Activated B cell treated with CpG ODN at 0.5 μM for 24 hours (primary cell): ENCODE measurements at regions of chr2 and their contacts with region 1.

Region 1: DNA sequence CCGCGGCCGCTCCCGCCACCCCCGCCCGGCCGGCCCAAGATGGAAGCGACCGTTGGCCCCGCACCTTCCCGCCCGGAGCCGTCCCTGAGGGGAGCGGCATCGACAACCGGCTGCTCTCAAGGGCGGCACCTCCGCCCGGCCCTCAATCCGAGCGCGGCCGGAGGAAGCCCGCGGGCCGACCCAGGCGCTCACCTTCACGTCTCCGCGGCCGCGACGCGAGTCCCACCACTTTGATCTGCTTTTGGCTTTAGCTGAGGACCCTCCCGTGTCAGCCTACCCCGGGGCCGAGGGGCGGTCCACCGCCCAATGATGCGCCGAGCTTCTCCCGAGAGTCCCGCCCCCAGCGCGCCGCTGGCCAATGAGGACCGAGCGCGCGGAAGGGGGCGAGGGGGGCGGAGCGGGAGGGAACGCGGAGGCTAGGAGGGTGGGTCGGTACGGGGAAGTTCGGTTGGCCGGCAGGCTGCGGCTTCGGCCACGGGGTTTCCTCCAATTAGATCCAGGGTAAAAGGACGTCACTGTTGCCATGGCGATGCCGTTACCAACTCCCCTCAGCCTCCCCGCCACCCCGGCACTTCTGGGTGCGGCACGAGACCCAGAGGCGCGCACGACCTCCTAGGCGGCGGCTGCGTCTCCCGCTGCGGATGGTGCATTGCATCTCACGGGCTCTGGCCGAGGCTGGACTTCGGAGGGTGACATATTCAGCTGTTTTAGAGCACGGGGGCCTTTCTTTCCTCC is at the start of gene YWHAQ:
- DNase-seq: peak; percentile 99
- ATAC-seq: peak; percentile 92
- H3K4me3 Mint-ChIP-seq: peak within 1 kb of the TSS; percentile 92
- H3K27ac Mint-ChIP-seq: peak within 1 kb of the TSS; percentile 89
- H3K4me1 Mint-ChIP-seq: peaks cover 52% of the 10 kb centered on the region
- H3K27me3 Mint-ChIP-seq: no peaks in the 10 kb centered on the region
- CTCF ChIP-seq: no peak
- total RNA-seq, gene YWHAQ: 164 and 166 TPM in 2 replicates

Region 2: GRCh38 chr2:8934338-8934737 is 696.6 kb before region 1 on chr2:
- CTCF ChIA-PET with region 1: no interaction called
- POLR2A ChIA-PET with region 1: no interaction called
- intact Hi-C with region 1: no loop called
- DNase-seq: no peak
- ATAC-seq: no peak
- H3K4me3 Mint-ChIP-seq: no peak overlapping the region
- H3K27ac Mint-ChIP-seq: no peak overlapping the region
- H3K4me1 Mint-ChIP-seq: no peaks in the 10 kb centered on the region
- H3K27me3 Mint-ChIP-seq: peaks cover 2% of the 10 kb centered on the region
- CTCF ChIP-seq: no peak

Region 3: DNA sequence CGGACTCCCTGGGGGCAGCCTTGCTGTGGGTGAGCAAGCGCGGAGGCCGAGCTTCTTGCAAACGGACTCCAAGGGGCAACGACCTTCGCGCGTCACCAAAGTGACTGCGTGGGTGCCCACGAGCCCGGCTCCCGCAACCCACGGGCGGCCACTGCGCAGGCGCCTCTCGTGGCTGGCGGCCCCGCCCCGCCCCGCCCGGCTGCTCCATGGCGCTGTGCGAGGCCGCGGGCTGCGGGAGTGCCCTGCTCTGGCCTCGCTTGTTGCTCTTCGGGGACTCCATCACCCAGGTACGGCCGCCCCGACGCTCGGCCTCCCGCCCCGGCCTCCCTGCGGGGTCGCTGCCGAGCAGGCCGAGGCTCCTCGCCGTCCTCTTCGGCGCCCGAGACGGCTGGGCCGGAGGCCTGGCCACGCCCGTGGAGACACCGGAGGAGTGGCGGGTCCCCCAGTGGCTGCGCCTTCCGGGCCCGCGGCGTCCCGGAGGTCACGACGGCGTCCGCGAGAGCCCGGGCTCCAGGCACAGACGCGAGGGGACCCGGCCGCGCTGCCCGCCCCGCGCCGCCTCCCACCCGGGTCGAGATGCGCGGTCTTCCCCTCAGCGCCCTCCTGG is 156.5 kb before region 1 on chr2 and contains the start of gene IAH1:
- CTCF ChIA-PET with region 1: interaction called, 5 read pairs
- POLR2A ChIA-PET with region 1: interaction called, 25 read pairs
- intact Hi-C with region 1: loop called (anchors 1 kb)
- DNase-seq: peak; percentile 69
- ATAC-seq: peak; percentile 82
- H3K4me3 Mint-ChIP-seq: peak within 1 kb of the TSS; percentile 80
- H3K27ac Mint-ChIP-seq: peak within 1 kb of the TSS; percentile 61
- H3K4me1 Mint-ChIP-seq: peaks cover 39% of the 10 kb centered on the region
- H3K27me3 Mint-ChIP-seq: no peaks in the 10 kb centered on the region
- CTCF ChIP-seq: no peak
- total RNA-seq, gene IAH1: 47.1 and 49.0 TPM in 2 replicates

Region 4: DNA sequence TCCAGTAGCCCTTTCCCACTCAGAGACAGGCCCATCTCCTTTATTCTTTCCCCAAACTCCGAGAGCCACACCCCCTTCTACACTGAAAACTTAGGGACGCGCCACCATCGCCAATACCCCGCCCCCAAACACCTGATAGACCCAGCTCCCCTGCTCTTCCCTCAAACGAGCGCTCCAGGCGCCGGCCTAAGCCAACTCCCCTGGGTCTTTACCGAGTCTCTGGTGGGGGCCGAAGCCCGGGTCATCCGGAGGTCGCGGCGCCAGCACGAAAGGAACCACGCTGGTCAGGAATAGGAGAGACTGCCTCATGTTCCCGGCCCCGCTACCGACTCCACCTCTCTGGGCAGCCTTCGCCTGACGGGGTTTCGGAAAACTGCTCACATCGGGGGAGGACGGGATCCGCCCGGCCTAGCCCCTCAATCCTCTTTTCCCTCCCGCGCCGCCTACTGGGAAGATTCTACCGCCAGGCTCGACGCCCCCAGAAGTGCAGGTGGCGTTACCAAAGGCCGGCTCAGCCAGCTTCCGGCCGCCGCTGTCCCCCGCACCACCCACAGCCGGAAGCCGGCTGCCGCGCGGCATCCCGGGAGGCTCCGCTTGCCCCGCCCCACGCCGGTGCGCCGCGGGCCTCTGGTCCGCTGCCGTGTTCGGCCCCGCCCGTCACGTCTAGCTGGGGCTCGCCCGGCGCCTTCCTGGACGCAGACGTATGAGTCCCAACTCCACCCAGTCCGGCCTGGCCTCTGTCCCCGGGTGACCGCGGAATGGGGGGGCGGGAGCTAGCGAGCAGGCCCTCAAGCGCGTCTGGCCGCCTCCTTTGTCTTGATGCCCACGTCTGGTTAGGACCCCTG is 75.4 kb before region 1 on chr2 and contains the start of gene ADAM17:
- CTCF ChIA-PET with region 1: no interaction called
- POLR2A ChIA-PET with region 1: interaction called, 74 read pairs
- intact Hi-C with region 1: loop called (anchors 1 kb)
- DNase-seq: peak; percentile 92
- ATAC-seq: peak; percentile 90
- H3K4me3 Mint-ChIP-seq: peak within 1 kb of the TSS; percentile 96
- H3K27ac Mint-ChIP-seq: peak within 1 kb of the TSS; percentile 98
- H3K4me1 Mint-ChIP-seq: peaks cover 54% of the 10 kb centered on the region
- H3K27me3 Mint-ChIP-seq: no peaks in the 10 kb centered on the region
- CTCF ChIP-seq: no peak
- total RNA-seq, gene ADAM17: 34.3 and 39.5 TPM in 2 replicates

Region 5: GRCh38 chr2:9618410-9618809 is 12.5 kb before region 1 on chr2:
- CTCF ChIA-PET with region 1: no interaction called
- POLR2A ChIA-PET with region 1: interaction called, 9 read pairs
- intact Hi-C with region 1: loop called (anchors 1 kb)
- DNase-seq: no peak
- ATAC-seq: peak; percentile 78
- H3K4me3 Mint-ChIP-seq: peak overlapping the region; percentile 68
- H3K27ac Mint-ChIP-seq: no peak overlapping the region
- H3K4me1 Mint-ChIP-seq: peaks cover 80% of the 10 kb centered on the region
- H3K27me3 Mint-ChIP-seq: no peaks in the 10 kb centered on the region
- CTCF ChIP-seq: no peak

Region 6: GRCh38 chr2:10122386-10123280 is 491.7 kb after region 1 on chr2 and contains the start of gene RRM2:
- CTCF ChIA-PET with region 1: no interaction called
- POLR2A ChIA-PET with region 1: no interaction called
- intact Hi-C with region 1: loop called (anchors 5 kb)
- DNase-seq: peak; percentile 77
- ATAC-seq: peak; percentile 82
- H3K4me3 Mint-ChIP-seq: peak within 1 kb of the TSS; percentile 97
- H3K27ac Mint-ChIP-seq: peak within 1 kb of the TSS; percentile 12
- H3K4me1 Mint-ChIP-seq: peaks cover 35% of the 10 kb centered on the region
- H3K27me3 Mint-ChIP-seq: peaks cover 8% of the 10 kb centered on the region
- CTCF ChIP-seq: no peak
- total RNA-seq, gene RRM2: 8.6 and 9.3 TPM in 2 replicates